Activated CD4-positive, alpha-beta memory T cell treated with anti-CD3 and anti-CD28 coated beads for 36 hours (primary cell): ENCODE measurements at regions of chr10 and their contacts with region 1.

Region 1: GRCh38 chr10:22251751-22252223 is 34.0 kb upstream of the EBLN1 start:
- DNase-seq: peak; percentile 83
- H3K4me3 Mint-ChIP-seq: peak overlapping the region; percentile 83
- H3K27ac Mint-ChIP-seq: peak overlapping the region; percentile 97
- H3K4me1 Mint-ChIP-seq: peaks cover 42% of the 10 kb centered on the region
- H3K27me3 Mint-ChIP-seq: peaks cover 3% of the 10 kb centered on the region

Region 2: DNA sequence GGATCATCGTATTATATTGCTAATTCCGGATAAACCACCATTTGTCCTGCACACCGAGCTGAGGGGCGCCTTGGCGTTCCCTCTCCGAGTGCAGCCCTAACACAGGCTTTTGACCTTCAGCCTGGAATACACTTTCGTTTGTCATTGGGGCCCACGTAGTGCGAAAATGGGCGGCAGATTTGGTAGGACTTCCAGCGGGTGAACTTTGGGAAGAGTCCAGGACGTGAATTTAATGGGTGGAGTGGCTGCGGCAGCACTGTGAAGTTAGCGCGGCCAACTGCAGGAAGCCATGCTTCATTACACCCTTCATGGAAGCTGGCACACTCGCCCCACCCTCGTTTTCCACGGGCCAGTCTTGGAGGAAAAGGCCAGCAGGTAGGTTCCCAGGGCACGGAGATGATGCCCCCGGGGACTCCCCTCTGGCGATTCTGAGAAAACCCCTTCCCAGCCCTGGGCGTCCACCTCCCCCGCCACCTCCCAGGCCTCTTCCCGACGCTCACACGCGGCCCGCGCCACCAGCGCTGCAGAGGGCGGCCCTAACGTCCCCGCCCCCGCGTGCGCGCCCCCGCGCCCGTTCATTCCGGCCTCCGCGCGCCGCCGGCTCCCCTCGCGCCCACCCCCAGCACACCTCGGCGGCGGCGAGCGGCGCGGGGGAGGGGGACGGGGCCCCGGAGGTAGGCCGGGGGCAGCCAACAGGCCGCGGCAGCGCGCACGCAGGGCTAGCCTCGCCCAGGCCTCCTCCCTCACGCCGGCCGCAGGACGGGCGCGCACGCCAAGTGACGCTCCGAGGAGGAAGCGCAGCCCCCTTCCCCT is 718.1 kb before region 1 on chr10 and contains the start of gene MLLT10:
- CTCF ChIA-PET with region 1: no interaction called
- POLR2A ChIA-PET with region 1: no interaction called
- intact Hi-C with region 1: loop called (anchors 2 kb)
- DNase-seq: peak; percentile 94
- H3K4me3 Mint-ChIP-seq: peak within 1 kb of the TSS; percentile 87
- H3K27ac Mint-ChIP-seq: peak within 1 kb of the TSS; percentile 96
- H3K4me1 Mint-ChIP-seq: peaks cover 27% of the 10 kb centered on the region
- H3K27me3 Mint-ChIP-seq: no peaks in the 10 kb centered on the region
- total RNA-seq, gene MLLT10: 32.8 to 35.4 TPM

Region 3: GRCh38 chr10:22475651-22476600 is 224.1 kb after region 1 on chr10:
- CTCF ChIA-PET with region 1: no interaction called
- POLR2A ChIA-PET with region 1: no interaction called
- intact Hi-C with region 1: no loop called
- DNase-seq: peak; percentile 57
- H3K4me3 Mint-ChIP-seq: peak overlapping the region; percentile 80
- H3K27ac Mint-ChIP-seq: no peak overlapping the region
- H3K4me1 Mint-ChIP-seq: peaks cover 13% of the 10 kb centered on the region
- H3K27me3 Mint-ChIP-seq: peaks cover 55% of the 10 kb centered on the region